ENCODE measurements at regions of chr12 and their contacts with region 1.

Region 1: GRCh38 chr12:14948672-14949071 is 10.3 kb upstream of the ERP27 start:
- DNase-seq: peak in 1 of 2 donors; percentile 44
- ATAC-seq: peak; percentile 83 to 90 (median 86)
- H3K4me3 ChIP-seq: peak overlapping the region in 1 of 10 donors; percentile 35
- H3K27ac ChIP-seq: peak overlapping the region; percentile 30 to 95 (median 80)
- H3K4me1 ChIP-seq: peaks cover 8 to 79% (median 55%) of the 10 kb centered on the region in 9 donors
- H3K27me3 ChIP-seq: no peaks in the 10 kb centered on the region
- CTCF ChIP-seq: no peak

Region 2: GRCh38 chr12:14884458-14884878 is 64.2 kb before region 1 on chr12:
- intact Hi-C with region 1: loop called in 1 of 10 experiments (anchors 5 kb)
- DNase-seq: peak; percentile 73 to 89
- ATAC-seq: peak; percentile 63 to 81 (median 75)
- H3K4me3 ChIP-seq: peak overlapping the region; percentile 2 to 61 (median 46)
- H3K27ac ChIP-seq: peak overlapping the region; percentile 41 to 89 (median 76)
- H3K4me1 ChIP-seq: peaks cover 0 to 43% (median 26%) of the 10 kb centered on the region in 9 donors
- H3K27me3 ChIP-seq: no peaks in the 10 kb centered on the region
- CTCF ChIP-seq: no peak

Region 3: GRCh38 chr12:14892726-14893505 is 55.8 kb before region 1 on chr12:
- intact Hi-C with region 1: loop called in 3 of 10 experiments (anchors 5 to 10 kb)
- DNase-seq: peak in 1 of 2 donors; percentile 57
- ATAC-seq: peak; percentile 77 to 87 (median 86)
- H3K4me3 ChIP-seq: peak overlapping the region in 1 of 10 donors; percentile 9
- H3K27ac ChIP-seq: peak overlapping the region; percentile 43 to 80 (median 74)
- H3K4me1 ChIP-seq: peaks cover 0 to 55% (median 11%) of the 10 kb centered on the region in 9 donors
- H3K27me3 ChIP-seq: no peaks in the 10 kb centered on the region
- CTCF ChIP-seq: peak in 4 of 9 donors; percentile 3 to 48 (median 32)

Region 4: GRCh38 chr12:14901228-14901562 is 47.5 kb before region 1 on chr12:
- intact Hi-C with region 1: loop called in 4 of 10 experiments (anchors 5 to 10 kb)
- DNase-seq: peak in 1 of 2 donors; percentile 40
- ATAC-seq: peak in 6 of 8 donors; percentile 47 to 67 (median 56)
- H3K4me3 ChIP-seq: no peak overlapping the region
- H3K27ac ChIP-seq: peak overlapping the region in 9 of 10 donors; percentile 7 to 90 (median 63)
- H3K4me1 ChIP-seq: peaks cover 2 to 73% (median 50%) of the 10 kb centered on the region in 9 donors
- H3K27me3 ChIP-seq: no peaks in the 10 kb centered on the region
- CTCF ChIP-seq: peak in 8 of 9 donors; percentile 9 to 49 (median 26)

Region 5: DNA sequence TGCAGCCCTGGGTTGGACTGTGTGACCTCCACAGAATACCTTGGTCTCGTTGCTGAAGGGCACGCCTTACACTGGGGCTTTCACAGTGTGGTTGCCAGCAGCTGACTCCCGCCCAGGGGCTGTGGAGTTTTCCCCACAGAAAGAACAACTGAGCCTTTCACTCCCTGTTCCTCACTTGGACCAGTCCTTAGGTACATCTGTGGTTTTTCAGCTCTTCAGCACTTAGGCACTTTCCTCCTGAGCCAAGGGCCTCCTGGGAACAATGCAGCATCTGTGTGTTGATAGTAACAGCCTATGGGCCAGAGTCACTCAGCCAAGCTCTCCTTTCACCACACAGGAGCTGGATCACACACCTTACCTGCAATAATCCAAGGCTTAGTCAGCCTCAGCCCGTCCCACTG is 35.3 kb before region 1 on chr12:
- intact Hi-C with region 1: loop called in 2 of 10 experiments (anchors 5 kb)
- DNase-seq: peak; percentile 8 to 39
- ATAC-seq: peak; percentile 64 to 90 (median 74)
- H3K4me3 ChIP-seq: no peak overlapping the region
- H3K27ac ChIP-seq: peak overlapping the region in 4 of 10 donors; percentile 24 to 45 (median 38)
- H3K4me1 ChIP-seq: peaks cover 0 to 13% (median 4%) of the 10 kb centered on the region in 9 donors
- H3K27me3 ChIP-seq: no peaks in the 10 kb centered on the region
- CTCF ChIP-seq: no peak

Region 6: GRCh38 chr12:14979468-14979867 is 30.8 kb after region 1 on chr12:
- intact Hi-C with region 1: loop called in 1 of 10 experiments (anchors 2 kb)
- DNase-seq: no peak
- ATAC-seq: no peak
- H3K4me3 ChIP-seq: no peak overlapping the region
- H3K27ac ChIP-seq: no peak overlapping the region
- H3K4me1 ChIP-seq: peaks cover 0 to 63% (median 0%) of the 10 kb centered on the region in 9 donors
- H3K27me3 ChIP-seq: no peaks in the 10 kb centered on the region
- CTCF ChIP-seq: no peak

Region 7: DNA sequence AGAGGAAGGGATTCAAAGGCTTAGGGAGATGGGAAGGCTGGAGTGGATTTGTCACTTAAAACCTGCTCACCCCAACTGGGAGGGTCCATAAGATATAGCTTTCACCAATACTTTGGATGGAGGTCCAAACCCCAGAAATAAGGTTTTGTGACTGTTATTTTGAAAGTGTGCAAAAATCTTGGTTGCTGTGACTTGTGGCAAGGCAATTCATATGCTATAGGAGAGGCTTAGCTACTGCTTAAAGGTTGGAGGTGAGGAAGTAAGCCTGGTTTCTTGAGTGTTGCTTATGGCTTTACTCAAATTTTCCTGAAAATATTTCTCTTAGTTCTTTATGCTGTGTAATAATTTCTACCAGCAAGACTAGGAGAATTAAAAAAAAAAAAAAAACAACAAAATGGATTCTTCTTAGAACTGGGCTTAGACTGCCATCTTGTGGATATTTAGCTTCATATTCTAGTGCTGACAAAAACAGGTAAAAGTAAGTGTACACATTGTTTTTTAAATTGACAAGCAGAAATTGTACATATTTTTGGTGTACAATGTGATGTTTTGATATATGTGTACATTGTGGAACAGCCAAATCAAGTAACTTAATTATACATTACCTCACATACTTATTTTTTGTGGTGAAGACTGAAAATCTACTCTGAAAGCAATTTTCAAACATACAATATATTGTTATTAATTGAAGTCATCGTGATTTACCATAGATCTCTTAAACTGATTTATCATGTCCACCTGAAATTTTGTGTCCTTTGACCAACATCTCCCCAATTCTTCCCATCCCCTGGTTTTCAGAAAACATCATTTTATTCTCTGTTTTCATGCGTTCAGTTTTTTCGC is 47.1 kb after region 1 on chr12:
- intact Hi-C with region 1: loop called in 1 of 10 experiments (anchors 10 kb)
- DNase-seq: no peak
- ATAC-seq: peak in 5 of 8 donors; percentile 16 to 67 (median 60)
- H3K4me3 ChIP-seq: no peak overlapping the region
- H3K27ac ChIP-seq: peak overlapping the region in 1 of 10 donors; percentile 23
- H3K4me1 ChIP-seq: peaks cover 0 to 25% (median 4%) of the 10 kb centered on the region in 9 donors
- H3K27me3 ChIP-seq: no peaks in the 10 kb centered on the region
- CTCF ChIP-seq: peak; percentile 64 to 85 (median 74)

Measured in heart right ventricle (tissue), 16 donors.